Cardiac septum (tissue), 1 donor: ENCODE measurements at regions of chr1 and their contacts with region 1.

Region 1: DNA sequence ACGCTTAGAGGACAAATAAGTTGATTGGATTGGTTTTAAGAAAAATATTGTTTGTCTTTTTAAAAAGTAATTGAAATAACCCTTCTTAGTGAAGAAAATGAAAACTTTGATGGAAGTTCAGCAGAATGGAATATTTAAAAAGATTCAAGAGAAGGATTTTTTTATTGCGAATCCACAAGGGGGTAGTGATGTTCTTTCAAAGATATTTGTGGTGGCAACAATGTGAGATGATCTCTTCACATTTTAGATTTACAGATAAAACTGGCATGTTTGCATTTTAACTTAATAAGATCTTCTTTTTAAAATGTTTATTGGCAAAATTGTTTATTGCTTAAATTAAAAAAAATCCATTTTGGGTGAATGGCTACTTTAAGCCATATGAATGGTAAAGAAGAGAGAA is 8.9 kb downstream of the CAMTA1 start:
- DNase-seq: no peak

Region 2: DNA sequence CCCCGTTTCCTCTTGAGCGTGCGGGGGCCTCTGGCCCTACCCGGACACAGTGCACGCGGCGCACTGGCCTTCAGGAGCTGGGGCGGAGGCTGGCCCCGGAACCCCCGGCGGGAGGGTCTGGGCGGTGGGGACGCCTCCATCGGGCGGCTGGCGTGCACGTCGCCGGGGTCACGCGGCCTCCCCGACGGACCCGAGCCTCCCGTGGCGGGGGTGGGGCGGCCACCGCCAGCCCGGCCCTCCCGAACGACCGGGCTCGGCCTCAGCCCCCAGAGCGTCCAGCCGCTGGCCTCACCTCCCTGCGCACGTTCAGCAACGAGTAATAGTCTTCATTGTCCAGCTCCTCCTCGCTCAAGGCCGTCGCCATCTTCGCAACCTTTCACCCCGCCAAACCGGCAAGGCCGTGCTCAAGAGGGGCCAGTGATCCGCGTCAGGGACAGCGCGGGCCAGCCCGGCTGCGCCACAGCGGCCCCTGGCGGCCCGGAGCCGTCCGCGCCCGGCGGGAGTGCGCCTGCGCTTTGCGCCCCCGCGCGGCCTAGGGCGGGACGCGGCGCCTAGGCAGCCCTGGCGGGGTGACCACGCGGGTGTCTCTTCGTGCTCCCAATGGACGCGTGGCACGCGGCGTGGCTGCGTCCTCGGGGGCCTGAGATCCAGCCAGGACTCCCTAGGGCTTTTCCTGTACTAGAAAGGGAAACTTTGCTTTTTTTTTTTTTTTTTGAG is 92.6 kb before region 1 on chr1 and contains the start of gene DNAJC11:
- intact Hi-C with region 1: no loop called
- DNase-seq: peak; percentile 96
- total RNA-seq, gene DNAJC11: 49.4 TPM

Region 3: DNA sequence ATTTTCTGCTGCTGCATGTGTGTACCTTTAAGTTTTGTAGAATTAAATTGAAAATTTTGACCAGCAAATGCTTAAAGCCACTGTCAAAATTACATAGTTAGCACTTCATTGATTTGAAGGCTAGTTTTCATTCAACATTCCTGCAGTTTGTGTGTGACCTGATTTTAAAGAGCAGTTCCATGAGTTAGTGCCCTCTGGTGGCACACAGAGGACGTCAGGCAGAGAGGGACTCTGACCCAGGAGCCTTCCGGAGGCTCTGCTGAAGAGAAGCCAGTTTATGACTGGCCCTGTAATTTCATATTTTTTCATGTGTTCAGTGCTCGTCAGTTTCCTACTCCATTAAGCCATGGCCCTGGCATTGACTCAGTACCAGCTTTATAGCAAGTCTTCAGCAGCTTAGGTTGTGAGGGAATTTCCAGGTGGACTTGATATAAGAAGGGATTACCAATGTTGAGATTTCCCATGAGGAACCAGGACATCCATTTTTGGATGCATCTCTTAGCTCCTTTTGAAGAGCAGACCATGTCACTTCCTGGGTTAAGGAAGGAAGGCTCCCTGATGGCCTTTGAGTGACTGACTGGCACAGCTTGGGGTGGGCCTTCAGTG is 95.8 kb after region 1 on chr1:
- intact Hi-C with region 1: loop called (anchors 5 kb)
- DNase-seq: peak; percentile 73

Region 4: DNA sequence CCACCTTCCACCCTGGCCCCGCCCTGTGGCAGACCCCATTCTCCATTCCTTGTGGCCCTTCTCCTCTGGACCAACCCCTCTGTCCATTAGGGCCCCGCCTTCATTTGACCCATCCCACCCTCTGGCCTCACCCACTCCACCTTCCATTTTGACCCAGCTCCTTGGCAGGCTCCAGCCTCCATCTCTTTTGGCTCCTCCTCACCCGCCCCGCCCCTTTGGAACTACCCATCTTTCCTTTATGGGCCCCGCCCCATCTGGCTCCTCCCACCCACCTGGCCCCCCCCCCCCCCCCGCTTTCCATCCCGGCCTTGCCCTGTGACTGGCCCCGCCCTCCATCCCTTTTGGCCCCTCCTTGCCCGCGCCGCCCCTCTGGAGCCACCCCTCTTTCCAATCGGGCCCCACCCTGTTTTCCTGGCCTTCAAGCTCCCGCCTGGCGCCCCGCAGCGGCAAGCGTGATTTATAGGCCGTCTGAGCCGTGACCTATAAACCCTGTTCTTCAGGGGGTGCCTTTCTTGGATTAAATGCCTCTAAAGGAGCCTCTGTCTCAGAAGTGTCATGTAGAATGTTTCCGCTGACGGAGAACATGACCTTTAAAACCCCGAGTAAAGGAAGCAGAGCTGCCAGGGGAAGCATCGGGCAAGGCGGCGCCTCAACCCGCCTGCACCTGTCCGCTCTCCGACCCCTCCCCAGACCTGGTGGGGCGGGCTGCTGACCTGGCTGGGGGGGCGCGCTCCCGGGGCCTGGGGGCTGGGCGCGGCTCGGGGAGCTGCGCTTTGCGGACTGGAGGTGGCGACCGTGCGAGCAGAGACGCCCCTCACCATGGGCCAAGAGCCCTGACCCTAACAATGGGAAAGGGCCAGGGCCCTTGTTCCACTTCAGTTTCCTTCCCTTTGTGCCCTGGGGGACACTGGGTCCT is 169.1 kb after region 1 on chr1:
- intact Hi-C with region 1: loop called (anchors 5 kb)
- DNase-seq: no peak

Region 5: DNA sequence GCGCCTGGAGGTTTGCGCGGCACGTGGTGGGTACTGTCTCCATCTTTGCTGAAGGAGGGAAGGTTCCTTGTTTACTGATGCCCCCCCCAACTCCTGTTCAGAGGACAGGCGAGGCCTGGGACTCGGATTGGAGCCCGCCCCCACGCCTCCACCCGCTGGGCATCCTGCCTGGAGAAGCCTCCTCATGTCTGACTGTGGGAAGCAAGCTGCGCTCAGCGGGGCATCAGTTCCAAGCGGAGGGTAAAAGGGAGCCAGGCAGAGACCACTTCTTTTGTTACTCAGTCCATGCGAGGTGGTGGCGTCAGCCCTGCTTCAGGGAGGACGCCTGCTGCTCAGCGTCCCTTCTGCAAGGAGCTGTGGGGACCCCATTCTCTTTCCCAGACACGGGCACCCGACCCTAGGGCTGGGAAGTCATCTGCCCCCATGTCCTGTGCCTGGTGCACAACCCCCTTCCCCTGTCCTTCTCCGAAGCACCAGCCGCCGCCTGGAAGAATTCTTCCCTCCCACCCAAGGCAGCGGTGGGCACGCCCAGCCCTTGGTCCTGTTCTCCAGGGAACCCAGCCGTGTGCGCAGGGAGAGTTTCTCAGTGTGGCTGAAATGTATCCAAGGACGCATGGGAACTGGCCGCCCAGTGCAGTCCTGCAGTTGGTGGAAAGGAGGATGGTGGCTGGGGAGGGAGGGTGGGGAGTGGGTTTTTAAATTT is 405.1 kb after region 1 on chr1:
- intact Hi-C with region 1: no loop called
- DNase-seq: no peak